ENCODE measurements at regions of chr11 and their contacts with region 1.

Region 1: GRCh38 chr11:6389921-6390724 is at the start of gene SMPD1:
- DNase-seq: peak; percentile 74
- ATAC-seq: peak; percentile 91
- H3K4me3 ChIP-seq: peak within 1 kb of the TSS; percentile 68 to 81 (median 78)
- H3K27ac ChIP-seq: no peak within 1 kb of the TSS
- H3K4me1 ChIP-seq: peaks cover 36% of the 10 kb centered on the region
- H3K27me3 ChIP-seq: no peaks in the 10 kb centered on the region; a peak in 3 of 5 replicates
- CTCF ChIP-seq: no peak
- EP300 ChIP-seq: no peak
- POLR2A ChIP-seq: peak in 1 of 2 experiments; percentile 37; a peak in 1 of 4 replicates
- RAD21 ChIP-seq: 0 out of 2 replicates have a peak, but pooled peaks have one; percentile 20
- total RNA-seq, gene SMPD1: 5.3 and 8.4 TPM in 2 replicates

Region 2: DNA sequence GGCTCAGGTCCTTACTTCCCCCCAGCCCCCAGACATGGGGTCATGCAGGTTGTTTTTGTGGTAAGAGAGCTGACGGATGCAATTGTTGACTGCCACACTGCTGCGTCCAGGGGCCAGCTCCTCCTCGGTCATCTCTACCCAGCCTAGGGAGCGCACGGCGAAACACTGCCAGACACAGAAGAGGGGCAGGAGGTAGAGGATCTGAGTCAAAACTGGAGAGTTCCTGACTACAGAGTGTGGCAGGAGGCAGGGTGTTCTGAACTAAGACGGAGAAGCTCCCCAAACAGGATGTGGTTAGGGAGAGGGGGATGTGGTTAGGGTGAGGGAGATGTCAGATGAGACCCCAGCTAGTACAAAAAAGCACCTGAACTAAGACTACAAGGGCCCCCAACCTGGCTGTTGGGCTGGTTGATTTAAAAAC is 12.4 kb after region 1 on chr11:
- CTCF ChIA-PET with region 1: no interaction called
- POLR2A ChIA-PET with region 1: interaction called, 16 read pairs
- in situ Hi-C with region 1: no loop called
- intact Hi-C with region 1: no loop called
- DNase-seq: no peak
- ATAC-seq: peak; percentile 26
- H3K4me3 ChIP-seq: no peak overlapping the region
- H3K27ac ChIP-seq: no peak overlapping the region
- H3K4me1 ChIP-seq: peaks cover 32% of the 10 kb centered on the region
- H3K27me3 ChIP-seq: peaks cover 0 to 3% of the 10 kb centered on the region in 2 experiments; a peak in 1 of 5 replicates
- CTCF ChIP-seq: no peak
- EP300 ChIP-seq: no peak
- POLR2A ChIP-seq: no peak
- RAD21 ChIP-seq: no peak

Region 3: DNA sequence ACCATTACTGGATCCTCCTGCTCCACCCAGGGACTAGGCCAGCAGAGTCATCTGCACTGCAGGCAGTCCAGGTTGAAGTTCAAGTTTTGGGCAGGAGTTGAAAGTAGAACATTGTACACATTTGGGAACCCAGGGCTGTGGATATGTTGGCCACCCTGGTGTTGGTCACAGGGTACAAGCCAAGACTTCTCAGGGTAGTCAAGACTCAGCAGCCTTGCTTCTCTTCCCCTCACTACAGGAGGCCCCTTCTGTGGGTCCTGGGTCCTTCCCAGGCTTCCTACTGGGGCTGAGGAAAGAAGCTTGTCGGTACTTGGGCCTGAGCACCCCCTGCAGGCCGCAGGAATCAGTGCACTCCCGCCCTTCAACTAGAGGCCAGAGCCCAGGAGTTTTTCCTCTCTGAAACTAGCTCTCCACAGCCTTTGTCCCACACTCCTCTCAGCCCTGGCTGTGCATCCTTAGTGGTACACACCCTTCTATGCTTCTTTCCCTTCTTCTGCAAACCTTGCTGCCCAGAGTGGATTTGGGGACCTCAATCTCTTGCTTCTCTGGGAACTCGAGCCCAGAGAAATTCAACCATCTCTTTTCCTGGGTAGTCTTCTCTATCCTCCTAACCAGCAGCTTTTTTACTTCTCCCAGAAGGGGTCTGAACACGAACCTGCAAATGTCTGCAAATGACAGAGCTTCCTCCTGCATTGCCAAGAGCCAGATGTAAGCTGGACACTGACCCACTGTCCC is 53.3 kb after region 1 on chr11:
- CTCF ChIA-PET with region 1: no interaction called
- POLR2A ChIA-PET with region 1: interaction called, 18 read pairs
- in situ Hi-C with region 1: no loop called
- intact Hi-C with region 1: loop called (anchors 5 kb)
- DNase-seq: peak; percentile 28
- ATAC-seq: peak; percentile 65
- H3K4me3 ChIP-seq: no peak overlapping the region
- H3K27ac ChIP-seq: no peak overlapping the region
- H3K4me1 ChIP-seq: peaks cover 54% of the 10 kb centered on the region
- H3K27me3 ChIP-seq: no peaks in the 10 kb centered on the region; a peak in 1 of 5 replicates
- CTCF ChIP-seq: peak; percentile 86
- EP300 ChIP-seq: no peak
- POLR2A ChIP-seq: no peak
- RAD21 ChIP-seq: 0 out of 2 replicates have a peak, but pooled peaks have one; percentile 41

Region 4: GRCh38 chr11:6505577-6506240 is 115.6 kb after region 1 on chr11:
- CTCF ChIA-PET with region 1: no interaction called
- POLR2A ChIA-PET with region 1: no interaction called
- in situ Hi-C with region 1: loop called (anchors 10 kb)
- intact Hi-C with region 1: no loop called
- DNase-seq: peak; percentile 25
- ATAC-seq: peak; percentile 78
- H3K4me3 ChIP-seq: no peak overlapping the region
- H3K27ac ChIP-seq: no peak overlapping the region
- H3K4me1 ChIP-seq: no peaks in the 10 kb centered on the region
- H3K27me3 ChIP-seq: no peaks in the 10 kb centered on the region; a peak in 1 of 5 replicates
- CTCF ChIP-seq: peak; percentile 75
- EP300 ChIP-seq: no peak
- POLR2A ChIP-seq: no peak
- RAD21 ChIP-seq: 0 out of 2 replicates have a peak, but pooled peaks have one; percentile 36